ENCODE measurements at regions of chrX and their contacts with region 1.

Region 1: DNA sequence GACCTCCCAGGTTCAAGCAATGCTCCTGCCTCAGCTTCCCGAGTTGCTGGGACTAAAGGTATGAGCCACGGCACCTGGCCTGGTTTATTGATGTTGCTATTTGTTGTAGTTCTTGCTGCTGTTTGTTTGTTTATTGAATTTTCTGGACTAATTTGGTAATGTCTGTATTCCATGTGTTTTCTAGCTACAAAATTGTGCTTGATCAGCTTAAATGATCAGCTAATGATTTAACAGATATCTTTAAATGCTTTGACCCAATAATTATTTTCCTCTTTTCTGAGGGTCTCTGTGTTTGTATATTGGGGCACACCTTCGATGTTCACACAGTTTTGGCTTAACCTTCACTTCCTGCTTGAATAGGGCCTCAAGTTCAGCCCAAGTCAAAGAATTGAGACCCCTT is 488.1 kb upstream of the HTR2C start:
- DNase-seq: no peak
- H3K4me3 ChIP-seq: no peak overlapping the region
- H3K27ac ChIP-seq: no peak overlapping the region
- H3K4me1 ChIP-seq: no peaks in the 10 kb centered on the region
- H3K27me3 ChIP-seq: no peaks in the 10 kb centered on the region
- CTCF ChIP-seq: no peak

Region 2: DNA sequence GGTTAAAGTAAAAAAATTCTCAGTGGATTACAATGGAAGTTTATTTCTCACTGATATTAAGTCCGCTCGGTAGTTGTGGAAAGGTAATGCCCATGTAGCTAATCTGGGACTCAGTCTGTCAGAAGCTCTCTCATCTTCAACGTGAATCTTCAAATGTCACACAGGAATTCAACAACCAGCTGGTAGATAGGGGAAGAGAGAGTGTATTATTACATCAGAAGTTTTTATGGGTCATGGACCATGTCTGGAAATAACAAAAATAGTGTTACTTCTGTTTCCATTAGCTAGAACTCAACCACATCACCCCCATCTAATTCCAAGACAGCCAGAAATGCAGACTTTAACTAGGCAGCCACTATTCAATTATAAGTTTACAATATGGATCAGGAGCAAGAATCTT is 18.0 kb before region 1 on chrX:
- intact Hi-C with region 1: loop called (anchors 2 kb)
- DNase-seq: no peak
- H3K4me3 ChIP-seq: no peak overlapping the region
- H3K27ac ChIP-seq: no peak overlapping the region
- H3K4me1 ChIP-seq: no peaks in the 10 kb centered on the region
- H3K27me3 ChIP-seq: no peaks in the 10 kb centered on the region
- CTCF ChIP-seq: no peak